IMR-90 (cell line): ENCODE measurements at regions of chr9 and their contacts with region 1.

Region 1: DNA sequence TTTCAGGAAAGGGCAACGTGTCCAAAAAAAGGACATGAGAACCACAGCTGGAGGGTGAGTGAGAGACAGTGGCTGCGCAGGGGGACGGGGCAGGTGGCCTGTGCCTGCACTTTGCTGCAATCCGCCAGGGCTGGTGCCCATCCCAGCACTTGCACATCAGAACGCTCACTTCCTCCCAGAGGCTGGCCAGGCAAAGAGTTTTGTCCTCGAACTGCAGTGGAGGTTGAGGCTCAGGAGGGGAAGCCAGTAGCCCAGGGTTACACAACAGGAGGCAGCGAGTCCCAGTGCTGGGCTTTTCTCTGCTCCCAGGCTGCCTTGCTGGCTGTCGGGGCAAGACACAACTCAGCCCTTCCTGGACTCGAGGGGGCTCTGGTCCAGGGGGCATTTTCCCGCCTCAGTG is 33.1 kb downstream of the CRB2 start:
- DNase-seq: no peak
- ATAC-seq: no peak
- H3K4me3 ChIP-seq: no peak overlapping the region
- H3K27ac ChIP-seq: no peak overlapping the region
- H3K4me1 ChIP-seq: no peaks in the 10 kb centered on the region
- H3K27me3 ChIP-seq: peaks cover 2% of the 10 kb centered on the region; the same call in 1 of the 2 replicates
- CTCF ChIP-seq: no peak
- POLR2A ChIP-seq: no peak
- RAD21 ChIP-seq: no peak

Region 2: GRCh38 chr9:123081824-123082223 is 307.2 kb before region 1 on chr9:
- CTCF ChIA-PET with region 1: no interaction called
- POLR2A ChIA-PET with region 1: no interaction called
- dilution Hi-C with region 1: no loop called
- in situ Hi-C with region 1: no loop called
- intact Hi-C with region 1: loop called (anchors 1 kb)
- DNase-seq: peak; percentile 55
- ATAC-seq: peak; percentile 92
- H3K4me3 ChIP-seq: no peak overlapping the region
- H3K27ac ChIP-seq: no peak overlapping the region
- H3K4me1 ChIP-seq: no peaks in the 10 kb centered on the region; the same call in 1 of the 2 replicates
- H3K27me3 ChIP-seq: no peaks in the 10 kb centered on the region
- CTCF ChIP-seq: peak; percentile 73
- POLR2A ChIP-seq: no peak
- RAD21 ChIP-seq: peak; percentile 71

Region 3: GRCh38 chr9:123338710-123339665 is 50.1 kb before region 1 on chr9:
- CTCF ChIA-PET with region 1: no interaction called
- POLR2A ChIA-PET with region 1: no interaction called
- dilution Hi-C with region 1: no loop called
- in situ Hi-C with region 1: no loop called
- intact Hi-C with region 1: no loop called
- DNase-seq: no peak
- ATAC-seq: no peak
- H3K4me3 ChIP-seq: no peak overlapping the region
- H3K27ac ChIP-seq: no peak overlapping the region
- H3K4me1 ChIP-seq: peaks cover 4% of the 10 kb centered on the region; the same call in 1 of the 2 replicates
- H3K27me3 ChIP-seq: peaks cover 6% of the 10 kb centered on the region
- CTCF ChIP-seq: no peak
- POLR2A ChIP-seq: no peak
- RAD21 ChIP-seq: no peak

Region 4: DNA sequence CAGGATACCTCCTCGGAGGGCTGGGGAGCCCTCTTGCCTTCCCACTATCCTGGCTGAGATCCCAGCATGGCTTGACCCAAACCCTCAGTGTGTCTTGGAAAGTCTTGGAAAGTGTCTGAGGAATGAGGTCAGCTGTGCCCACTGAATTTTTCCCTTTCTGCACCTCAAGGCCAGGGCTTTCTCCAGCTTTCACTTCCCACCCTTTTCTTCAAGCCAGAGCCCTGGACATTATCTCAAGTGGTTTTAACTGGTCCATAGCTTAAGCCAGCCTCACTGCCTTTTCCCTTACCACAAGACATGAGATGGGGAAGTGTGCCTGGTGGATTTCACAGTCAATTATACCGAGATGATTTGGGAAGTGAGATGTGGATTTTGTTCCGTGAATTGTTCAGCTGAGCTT is 586.8 kb after region 1 on chr9:
- CTCF ChIA-PET with region 1: no interaction called
- POLR2A ChIA-PET with region 1: no interaction called
- dilution Hi-C with region 1: no loop called
- in situ Hi-C with region 1: no loop called
- intact Hi-C with region 1: no loop called
- DNase-seq: no peak
- ATAC-seq: no peak
- H3K4me3 ChIP-seq: no peak overlapping the region
- H3K27ac ChIP-seq: no peak overlapping the region
- H3K4me1 ChIP-seq: no peaks in the 10 kb centered on the region
- H3K27me3 ChIP-seq: peaks cover 25% of the 10 kb centered on the region
- CTCF ChIP-seq: no peak
- POLR2A ChIP-seq: no peak
- RAD21 ChIP-seq: no peak